Activated naive CD4-positive, alpha-beta T cell treated with anti-CD3 and anti-CD28 coated beads, Interleukin-2, amount 10 ng/mL, durations not matched to agents 7 days and 5 days (primary cell): ENCODE measurements at regions of chr5 and their contacts with region 1.

Region 1: GRCh38 chr5:88680253-88681132 is 202.5 kb downstream of the MEF2C start:
- DNase-seq: peak; percentile 80
- H3K4me3 Mint-ChIP-seq: peak overlapping the region; percentile 33
- H3K27ac Mint-ChIP-seq: peak overlapping the region; percentile 28
- H3K4me1 Mint-ChIP-seq: peaks cover 14% of the 10 kb centered on the region
- H3K27me3 Mint-ChIP-seq: peaks cover 91% of the 10 kb centered on the region

Region 2: GRCh38 chr5:87780831-87781760 is 899.4 kb before region 1 on chr5:
- CTCF ChIA-PET with region 1: interaction called, 34 read pairs
- DNase-seq: peak; percentile 84
- H3K4me3 Mint-ChIP-seq: no peak overlapping the region
- H3K27ac Mint-ChIP-seq: no peak overlapping the region
- H3K4me1 Mint-ChIP-seq: no peaks in the 10 kb centered on the region
- H3K27me3 Mint-ChIP-seq: peaks cover 15% of the 10 kb centered on the region